RWPE1 (cell line): ENCODE measurements at regions of chr11 and their contacts with region 1.

Region 1: DNA sequence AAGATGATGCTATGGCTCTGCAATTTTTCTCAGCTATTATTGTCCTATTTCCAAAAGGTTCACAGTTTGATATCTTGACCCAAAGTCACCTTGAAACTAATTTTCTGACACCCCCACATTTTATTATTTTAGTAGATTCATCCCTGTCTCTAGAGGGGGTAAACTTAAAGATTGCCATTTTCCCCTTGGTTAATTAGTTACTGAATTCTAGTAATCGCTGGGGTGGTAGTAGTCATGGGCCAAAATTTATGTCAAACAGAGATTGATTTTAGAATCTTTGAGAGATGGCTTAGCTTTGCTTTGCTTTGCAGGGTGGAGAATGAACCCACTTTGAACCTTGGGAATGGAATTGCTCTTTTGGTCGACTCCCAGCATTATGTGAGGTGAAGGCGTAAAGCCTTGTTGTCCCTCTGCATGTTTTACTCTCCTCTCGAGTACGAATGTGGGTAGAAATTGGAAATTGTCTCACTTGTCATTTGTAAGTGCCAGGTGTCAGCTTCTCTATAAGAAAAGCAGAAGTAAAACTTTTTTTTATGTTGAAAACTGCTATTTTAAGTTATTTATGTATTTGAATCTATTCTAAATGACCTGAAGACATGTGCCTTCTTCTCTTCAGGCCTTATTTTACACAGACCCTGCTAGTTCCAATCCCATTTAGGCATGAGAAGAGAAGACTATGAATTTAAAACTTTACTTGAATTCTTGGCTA is 42.4 kb upstream of the RCE1 start:
- DNase-seq: no peak
- H3K27ac ChIP-seq: no peak overlapping the region
- CTCF ChIP-seq: no peak

Region 2: GRCh38 chr11:65883043-65883761 is 917.7 kb before region 1 on chr11:
- CTCF ChIA-PET with region 1: no interaction called
- POLR2A ChIA-PET with region 1: interaction called, 11 read pairs
- DNase-seq: no peak
- H3K27ac ChIP-seq: no peak overlapping the region
- CTCF ChIP-seq: no peak

Region 3: DNA sequence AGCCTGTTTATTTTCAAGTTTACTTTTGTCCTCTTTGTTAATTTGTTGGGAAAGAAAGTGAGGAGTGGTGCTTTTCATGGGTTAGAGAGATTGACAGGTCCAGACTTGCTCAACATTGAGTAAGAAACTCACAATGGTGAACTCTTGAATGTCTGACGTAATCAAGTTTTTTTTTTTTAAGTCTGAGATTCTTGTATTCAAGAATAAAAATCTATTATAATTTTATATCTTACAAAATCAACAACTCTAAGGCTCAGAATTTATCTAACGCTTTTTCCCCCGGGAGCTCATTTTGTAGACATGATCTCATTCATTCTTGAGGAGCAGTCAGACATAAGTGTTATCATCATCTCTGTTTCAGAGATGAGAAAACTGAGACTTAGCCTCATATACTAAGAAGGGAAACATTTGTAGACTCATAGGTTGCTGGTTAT is 32.8 kb before region 1 on chr11:
- CTCF ChIA-PET with region 1: interaction called, 12 read pairs
- POLR2A ChIA-PET with region 1: no interaction called
- DNase-seq: peak; percentile 80
- H3K27ac ChIP-seq: peak overlapping the region; percentile 81
- CTCF ChIP-seq: no peak

Region 4: GRCh38 chr11:66818231-66818955 is 17.5 kb after region 1 on chr11:
- CTCF ChIA-PET with region 1: no interaction called
- POLR2A ChIA-PET with region 1: no interaction called
- DNase-seq: no peak
- H3K27ac ChIP-seq: no peak overlapping the region
- CTCF ChIP-seq: no peak

Region 5: GRCh38 chr11:66842896-66843775 is 42.3 kb after region 1 on chr11 and contains the start of gene RCE1:
- CTCF ChIA-PET with region 1: no interaction called
- POLR2A ChIA-PET with region 1: no interaction called
- DNase-seq: peak; percentile 93
- H3K27ac ChIP-seq: peak within 1 kb of the TSS; percentile 89
- CTCF ChIP-seq: no peak